Activated naive CD4-positive, alpha-beta T cell treated with anti-CD3 and anti-CD28 coated beads for 36 hours (primary cell): ENCODE measurements at regions of chr11 and their contacts with region 1.

Region 1: GRCh38 chr11:18012863-18013781 is at the start of gene SERGEF:
- DNase-seq: peak; percentile 94
- H3K4me3 Mint-ChIP-seq: peak within 1 kb of the TSS; percentile 97
- H3K27ac Mint-ChIP-seq: peak within 1 kb of the TSS; percentile 95
- H3K4me1 Mint-ChIP-seq: peaks cover 39% of the 10 kb centered on the region
- H3K27me3 Mint-ChIP-seq: no peaks in the 10 kb centered on the region
- total RNA-seq, gene SERGEF: 40.2 to 41.7 TPM

Region 2: GRCh38 chr11:16902781-16903378 is 1110.2 kb before region 1 on chr11:
- CTCF ChIA-PET with region 1: no interaction called
- intact Hi-C with region 1: loop called (anchors 1 kb)
- DNase-seq: peak; percentile 30
- H3K4me3 Mint-ChIP-seq: peak overlapping the region; percentile 3
- H3K27ac Mint-ChIP-seq: peak overlapping the region; percentile 92
- H3K4me1 Mint-ChIP-seq: peaks cover 43% of the 10 kb centered on the region
- H3K27me3 Mint-ChIP-seq: no peaks in the 10 kb centered on the region

Region 3: DNA sequence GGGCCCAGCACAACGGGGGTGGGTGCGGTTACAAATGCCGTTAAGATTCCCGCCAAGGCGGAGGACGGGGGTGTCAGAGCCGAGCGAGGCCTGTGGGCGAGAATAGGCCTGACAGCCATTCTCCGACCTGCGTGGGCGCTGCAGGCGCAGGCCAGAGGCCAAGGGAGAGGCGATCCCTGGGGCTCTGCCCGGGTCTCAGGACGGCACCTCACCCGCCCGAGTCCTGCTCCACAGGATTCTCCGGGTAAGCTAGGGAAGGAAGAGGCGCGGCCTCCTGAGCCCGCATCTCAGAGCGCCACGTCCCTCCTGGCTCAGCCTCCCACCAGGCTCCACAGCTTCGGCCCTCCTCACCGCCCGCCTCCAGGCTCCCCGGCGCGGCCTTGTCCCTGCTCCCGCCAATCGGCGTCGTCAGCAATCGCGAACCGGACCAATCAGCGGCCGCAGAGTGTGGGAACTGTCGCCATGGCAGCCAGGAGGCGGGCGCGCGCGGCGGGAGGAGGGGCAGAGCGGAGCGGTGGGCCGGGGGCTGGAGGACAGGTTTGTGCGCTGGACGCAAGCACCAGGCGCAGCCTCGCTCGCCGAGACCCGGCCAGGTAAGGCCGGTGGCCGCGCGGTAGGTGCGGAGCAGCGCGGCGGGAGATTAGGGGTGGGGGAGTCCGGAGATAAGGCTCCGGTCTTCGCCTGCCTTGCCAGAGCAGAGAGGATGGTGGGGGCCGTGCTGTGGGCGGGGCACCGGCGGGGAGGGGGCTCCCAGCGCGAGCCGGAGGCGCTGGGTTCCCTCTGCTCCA is 736.7 kb before region 1 on chr11 and contains the start of gene NUCB2:
- CTCF ChIA-PET with region 1: no interaction called
- intact Hi-C with region 1: loop called (anchors 5 kb)
- DNase-seq: peak; percentile 98
- H3K4me3 Mint-ChIP-seq: peak within 1 kb of the TSS; percentile 75
- H3K27ac Mint-ChIP-seq: peak within 1 kb of the TSS; percentile 83
- H3K4me1 Mint-ChIP-seq: peaks cover 33% of the 10 kb centered on the region
- H3K27me3 Mint-ChIP-seq: no peaks in the 10 kb centered on the region
- total RNA-seq, gene NUCB2: 67.7 to 74.0 TPM

Region 4: GRCh38 chr11:18321980-18322711 is 309.0 kb after region 1 on chr11 and contains the starts of genes GTF2H1 and HPS5:
- CTCF ChIA-PET with region 1: no interaction called
- intact Hi-C with region 1: loop called (anchors 1 kb)
- DNase-seq: peak; percentile 98
- H3K4me3 Mint-ChIP-seq: peak within 1 kb of the TSS; percentile 98
- H3K27ac Mint-ChIP-seq: peak within 1 kb of the TSS; percentile 100
- H3K4me1 Mint-ChIP-seq: peaks cover 64% of the 10 kb centered on the region
- H3K27me3 Mint-ChIP-seq: no peaks in the 10 kb centered on the region
- total RNA-seq, gene GTF2H1: 33.4 to 34.1 TPM
- total RNA-seq, gene HPS5: 21.7 to 21.9 TPM

Region 5: DNA sequence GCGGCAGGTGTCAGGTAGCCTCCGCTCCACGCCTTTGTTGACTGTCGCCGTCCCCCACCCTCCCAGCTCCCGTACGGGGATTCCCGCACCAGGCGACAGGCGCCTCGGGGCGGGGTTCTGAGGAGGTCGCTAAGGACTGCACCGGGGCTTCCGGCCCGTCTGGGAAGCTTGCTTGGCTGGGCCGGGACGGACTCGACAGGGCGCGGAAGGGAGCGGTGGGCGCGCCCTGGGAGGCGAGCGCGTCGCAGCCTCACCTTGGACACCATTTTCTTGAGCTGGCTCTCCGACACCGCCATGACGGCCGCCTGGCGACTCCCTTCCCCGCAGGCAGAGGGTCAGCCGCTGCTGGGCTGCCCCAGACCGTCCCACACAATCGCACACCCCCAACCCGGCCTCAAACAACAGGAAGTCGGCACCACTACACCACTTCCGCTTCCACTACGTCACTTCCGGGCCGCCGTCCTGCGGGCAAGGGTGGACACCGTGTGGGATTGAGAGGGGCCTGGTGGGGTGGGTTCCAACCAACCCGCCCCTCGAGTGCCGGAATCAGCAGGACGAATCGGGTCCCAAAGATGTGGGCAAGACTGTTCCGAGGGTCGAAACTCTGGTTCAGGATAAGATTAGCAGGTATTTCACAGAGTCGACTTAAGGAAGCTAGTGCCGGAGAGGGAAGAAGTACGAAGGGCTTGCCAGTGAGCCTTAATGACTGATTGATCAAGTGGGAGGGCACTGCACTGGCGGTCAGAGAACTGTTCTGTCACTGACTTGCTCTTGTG is 513.6 kb after region 1 on chr11 and contains the start of gene TSG101:
- CTCF ChIA-PET with region 1: no interaction called
- intact Hi-C with region 1: loop called (anchors 1 kb)
- DNase-seq: peak; percentile 94
- H3K4me3 Mint-ChIP-seq: peak within 1 kb of the TSS; percentile 100
- H3K27ac Mint-ChIP-seq: peak within 1 kb of the TSS; percentile 100
- H3K4me1 Mint-ChIP-seq: peaks cover 45% of the 10 kb centered on the region
- H3K27me3 Mint-ChIP-seq: no peaks in the 10 kb centered on the region
- total RNA-seq, gene TSG101: 33.2 to 40.5 TPM

Region 6: GRCh38 chr11:18721561-18722292 is 708.6 kb after region 1 on chr11:
- CTCF ChIA-PET with region 1: no interaction called
- intact Hi-C with region 1: loop called (anchors 2 kb)
- DNase-seq: peak; percentile 70
- H3K4me3 Mint-ChIP-seq: peak overlapping the region; percentile 78
- H3K27ac Mint-ChIP-seq: no peak overlapping the region
- H3K4me1 Mint-ChIP-seq: peaks cover 2% of the 10 kb centered on the region
- H3K27me3 Mint-ChIP-seq: no peaks in the 10 kb centered on the region

Region 7: DNA sequence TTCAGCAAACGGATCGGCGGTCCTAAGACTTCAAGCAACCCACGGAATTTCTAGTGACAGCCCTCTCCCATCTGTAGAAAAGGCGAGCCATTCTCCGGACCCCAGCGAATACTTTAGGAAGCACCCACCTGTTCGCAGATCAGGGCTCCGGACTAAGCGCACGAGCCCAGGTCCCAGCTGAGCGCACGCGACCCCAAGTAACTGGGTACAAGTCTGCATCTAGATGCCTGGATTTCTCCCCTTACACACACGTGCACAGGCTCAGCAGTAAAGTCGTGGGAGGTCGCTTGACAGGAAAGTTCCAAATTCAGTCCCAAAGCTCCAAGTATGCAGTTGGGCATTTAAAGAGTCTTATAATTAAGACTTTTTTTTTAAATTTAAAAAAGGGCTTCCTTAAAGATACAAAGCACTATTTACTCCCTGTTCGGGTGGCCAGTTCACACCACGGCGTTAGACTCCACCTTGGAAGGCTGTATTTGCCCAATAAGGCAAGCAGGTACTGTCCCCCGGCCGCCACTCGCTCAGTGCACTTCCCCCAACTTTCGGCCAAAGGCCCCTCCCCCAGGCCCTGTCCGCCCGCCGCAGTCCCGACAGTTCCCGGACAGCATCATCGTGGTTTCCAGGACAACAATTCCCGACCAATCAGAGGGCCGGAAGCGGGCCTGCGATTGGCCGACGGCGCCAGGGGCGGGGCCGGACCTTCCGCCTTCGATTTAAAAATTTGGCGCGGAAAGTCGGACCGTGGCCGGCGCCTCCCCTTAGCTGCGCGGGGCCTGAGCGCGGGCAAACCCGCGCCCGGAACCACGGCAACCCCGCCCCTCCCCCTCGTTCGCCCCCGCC is 1227.5 kb after region 1 on chr11 and contains the start of gene E2F8:
- CTCF ChIA-PET with region 1: no interaction called
- intact Hi-C with region 1: loop called (anchors 5 kb)
- DNase-seq: peak; percentile 96
- H3K4me3 Mint-ChIP-seq: peak within 1 kb of the TSS; percentile 93
- H3K27ac Mint-ChIP-seq: peak within 1 kb of the TSS; percentile 66
- H3K4me1 Mint-ChIP-seq: peaks cover 15% of the 10 kb centered on the region
- H3K27me3 Mint-ChIP-seq: peaks cover 47% of the 10 kb centered on the region
- total RNA-seq, gene E2F8: 19.5 to 21.2 TPM